Gastrocnemius medialis (tissue), 4 donors: ENCODE measurements at regions of chr1 and their contacts with region 1.

Region 1: DNA sequence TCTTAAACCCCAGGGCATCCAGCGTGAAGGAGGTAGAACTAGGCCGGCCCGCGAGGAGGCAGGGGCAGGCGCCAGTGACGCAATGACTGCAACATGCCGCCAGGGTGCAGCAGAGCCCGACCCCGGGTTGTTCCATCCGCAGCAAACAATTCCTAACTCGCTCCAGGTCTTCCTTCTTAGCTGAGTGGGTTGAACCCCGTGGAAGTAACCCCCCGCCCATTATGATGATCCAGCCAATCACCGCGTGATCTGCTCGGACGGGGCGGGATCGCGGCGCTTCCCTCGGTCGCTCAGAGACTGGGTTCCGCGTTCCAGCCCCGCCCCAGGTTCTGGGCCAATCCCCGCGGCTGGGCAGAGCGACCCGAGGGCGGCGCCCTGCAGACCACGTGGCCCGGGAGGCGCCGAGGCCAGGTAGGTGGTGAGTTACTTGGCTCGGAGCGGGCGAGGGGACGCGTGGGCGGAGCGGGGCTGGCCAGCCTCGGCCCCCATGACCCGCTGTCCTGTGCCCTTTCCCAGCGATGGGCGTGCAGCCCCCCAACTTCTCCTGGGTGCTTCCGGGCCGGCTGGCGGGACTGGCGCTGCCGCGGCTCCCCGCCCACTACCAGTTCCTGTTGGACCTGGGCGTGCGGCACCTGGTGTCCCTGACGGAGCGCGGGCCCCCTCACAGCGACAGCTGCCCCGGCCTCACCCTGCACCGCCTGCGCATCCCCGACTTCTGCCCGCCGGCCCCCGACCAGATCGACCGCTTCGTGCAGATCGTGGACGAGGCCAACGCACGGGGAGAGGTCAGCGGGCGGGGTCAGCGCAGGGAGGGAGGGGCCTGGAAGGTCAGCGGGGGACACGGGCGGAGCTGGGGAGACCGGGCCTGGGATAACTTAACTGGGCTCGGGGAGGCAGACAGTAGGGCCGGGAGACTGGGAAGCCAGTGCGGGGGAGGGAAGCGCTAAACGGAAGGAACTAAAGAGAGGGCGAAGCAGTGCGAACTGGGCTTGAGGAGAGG is at the start of gene DUSP23:
- DNase-seq: peak; percentile 97 to 98
- ATAC-seq: peak; percentile 96 to 97
- H3K4me3 ChIP-seq: peak within 1 kb of the TSS; percentile 73 to 95 (median 85)
- H3K27ac ChIP-seq: peak within 1 kb of the TSS; percentile 81 to 92 (median 84)
- H3K4me1 ChIP-seq: peaks cover 15 to 20% of the 10 kb centered on the region in 2 donors
- H3K27me3 ChIP-seq: no peaks in the 10 kb centered on the region
- CTCF ChIP-seq: peak; percentile 90 to 94 (median 93)
- POLR2A ChIP-seq: peak; percentile 76 to 83
- total RNA-seq, gene DUSP23: 47.0 to 94.6 (median 77.2) TPM

Region 2: GRCh38 chr1:159161001-159161718 is 619.7 kb before region 1 on chr1:
- in situ Hi-C with region 1: loop called in 1 of 4 experiments (anchors 25 kb)
- intact Hi-C with region 1: no loop called
- DNase-seq: peak; percentile 66 to 82
- ATAC-seq: peak; percentile 98 to 100
- H3K4me3 ChIP-seq: no peak overlapping the region
- H3K27ac ChIP-seq: peak overlapping the region; percentile 71 to 86 (median 78)
- H3K4me1 ChIP-seq: peaks cover 5 to 7% of the 10 kb centered on the region in 2 donors
- H3K27me3 ChIP-seq: peaks cover 0 to 1% (median 0%) of the 10 kb centered on the region in 3 donors
- CTCF ChIP-seq: peak; percentile 81 to 99 (median 88)
- POLR2A ChIP-seq: no peak

Region 3: DNA sequence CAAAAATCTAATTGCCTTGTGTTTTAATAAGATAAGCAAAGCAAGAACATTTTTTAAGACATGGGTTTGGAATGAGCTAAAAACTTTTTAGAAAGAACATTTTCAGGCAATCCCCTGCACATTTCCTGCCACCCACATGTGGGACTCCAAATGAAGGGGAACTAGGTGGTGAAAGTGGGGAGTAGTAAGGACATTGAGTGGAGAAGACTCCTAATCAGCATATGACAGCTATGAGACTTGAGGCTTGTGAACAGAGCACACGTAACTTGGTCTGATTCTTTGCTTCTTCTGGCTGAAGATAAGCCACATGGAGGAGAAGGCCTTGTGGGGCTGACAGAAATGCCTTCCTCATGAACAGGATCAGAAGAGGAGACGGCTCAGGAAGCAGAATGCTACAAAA is 428.4 kb before region 1 on chr1:
- in situ Hi-C with region 1: no loop called
- intact Hi-C with region 1: no loop called
- DNase-seq: no peak
- ATAC-seq: no peak
- H3K4me3 ChIP-seq: no peak overlapping the region
- H3K27ac ChIP-seq: no peak overlapping the region
- H3K4me1 ChIP-seq: no peaks in the 10 kb centered on the region
- H3K27me3 ChIP-seq: no peaks in the 10 kb centered on the region
- CTCF ChIP-seq: no peak
- POLR2A ChIP-seq: no peak

Region 4: GRCh38 chr1:159854693-159855192 is 73.9 kb after region 1 on chr1:
- in situ Hi-C with region 1: no loop called
- intact Hi-C with region 1: loop called (anchors 2 kb)
- DNase-seq: peak; percentile 64 to 75
- ATAC-seq: peak; percentile 85 to 86
- H3K4me3 ChIP-seq: peak overlapping the region; percentile 69 to 99 (median 82)
- H3K27ac ChIP-seq: peak overlapping the region; percentile 82 to 95 (median 89)
- H3K4me1 ChIP-seq: peaks cover 8 to 14% of the 10 kb centered on the region in 2 donors
- H3K27me3 ChIP-seq: no peaks in the 10 kb centered on the region
- CTCF ChIP-seq: peak in 3 of 5 experiments; percentile 9 to 30 (median 17)
- POLR2A ChIP-seq: peak; percentile 55 to 71

Region 5: GRCh38 chr1:159936273-159936904 is 155.5 kb after region 1 on chr1:
- in situ Hi-C with region 1: no loop called
- intact Hi-C with region 1: loop called (anchors 5 kb)
- DNase-seq: peak in 1 of 2 donors; percentile 43
- ATAC-seq: peak in 1 of 2 donors; percentile 76
- H3K4me3 ChIP-seq: no peak overlapping the region
- H3K27ac ChIP-seq: no peak overlapping the region
- H3K4me1 ChIP-seq: no peaks in the 10 kb centered on the region
- H3K27me3 ChIP-seq: no peaks in the 10 kb centered on the region
- CTCF ChIP-seq: peak; percentile 82 to 97 (median 95)
- POLR2A ChIP-seq: no peak

Region 6: GRCh38 chr1:159970932-159971342 is 190.1 kb after region 1 on chr1:
- in situ Hi-C with region 1: no loop called
- intact Hi-C with region 1: no loop called
- DNase-seq: no peak
- ATAC-seq: no peak
- H3K4me3 ChIP-seq: no peak overlapping the region
- H3K27ac ChIP-seq: no peak overlapping the region
- H3K4me1 ChIP-seq: no peaks in the 10 kb centered on the region
- H3K27me3 ChIP-seq: peaks cover 0 to 3% (median 0%) of the 10 kb centered on the region in 3 donors
- CTCF ChIP-seq: no peak
- POLR2A ChIP-seq: no peak

Region 7: DNA sequence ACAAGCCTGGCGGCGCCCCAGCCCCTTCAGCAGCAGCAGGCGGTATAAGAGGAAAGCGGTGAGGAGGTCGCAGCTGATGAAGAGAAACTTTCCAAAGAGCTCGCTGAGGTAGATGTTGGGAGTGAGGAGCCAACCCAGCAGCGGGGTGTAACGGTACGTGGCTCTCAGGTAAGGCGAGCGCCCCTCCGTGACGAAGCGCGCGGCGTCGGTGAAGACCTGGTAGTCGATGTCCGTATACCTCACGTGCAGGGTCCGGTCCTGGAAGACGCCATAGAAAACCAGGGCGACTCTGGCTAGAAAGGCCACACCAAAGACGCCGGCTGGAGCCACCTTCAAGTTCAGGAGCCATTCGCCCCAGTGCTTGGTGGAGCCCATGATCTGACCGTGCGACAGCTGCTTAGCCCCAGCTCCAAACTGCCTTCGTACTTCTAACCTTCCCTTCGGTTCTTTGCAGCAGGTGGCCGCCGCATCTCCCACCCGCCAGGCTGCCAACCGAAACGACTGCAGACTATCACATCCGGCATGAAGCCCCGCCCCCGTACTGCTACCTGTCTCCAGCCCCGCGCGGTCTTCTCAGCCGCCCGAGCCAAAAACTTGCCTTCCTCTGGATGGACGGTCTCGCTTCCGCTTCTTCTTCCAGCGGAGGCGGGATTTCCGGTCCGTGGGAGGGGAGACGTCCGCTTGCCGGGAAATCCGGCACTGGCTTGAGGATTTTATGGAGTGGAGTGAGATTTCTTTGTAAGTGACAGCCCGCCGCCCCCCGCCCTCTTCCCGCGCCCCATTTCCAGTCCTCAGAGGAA is 250.7 kb after region 1 on chr1 and contains the start of gene PIGM:
- in situ Hi-C with region 1: loop called in 2 of 4 experiments (anchors 10 kb)
- intact Hi-C with region 1: loop called (anchors 1 kb)
- DNase-seq: peak; percentile 90 to 94
- ATAC-seq: peak; percentile 97
- H3K4me3 ChIP-seq: peak within 1 kb of the TSS; percentile 80 to 94 (median 88)
- H3K27ac ChIP-seq: peak within 1 kb of the TSS; percentile 74 to 88 (median 81)
- H3K4me1 ChIP-seq: peaks cover 18 to 23% of the 10 kb centered on the region in 2 donors
- H3K27me3 ChIP-seq: no peaks in the 10 kb centered on the region
- CTCF ChIP-seq: no peak
- POLR2A ChIP-seq: peak in 1 of 2 donors; percentile 57
- total RNA-seq, gene PIGM: 0.55 to 0.75 (median 0.72) TPM